HepG2 (cell line): ENCODE measurements at regions of chr1 and their contacts with region 1.

Region 1: GRCh38 chr1:8169364-8170058 is 143.4 kb upstream of the ERRFI1 start:
- DNase-seq: peak; percentile 93
- ATAC-seq: peak; percentile 90
- H3K4me3 ChIP-seq: peak overlapping the region in 1 of 3 experiments; percentile 42; a peak in 2 of 6 replicates
- H3K27ac ChIP-seq: peak overlapping the region; percentile 97
- H3K4me1 ChIP-seq: peaks cover 76% of the 10 kb centered on the region
- H3K27me3 ChIP-seq: no peaks in the 10 kb centered on the region
- CTCF ChIP-seq: no peak
- EP300 ChIP-seq: peak in 1 of 2 experiments; percentile 86; a peak in 2 of 4 replicates
- POLR2A ChIP-seq: peak in 1 of 2 experiments; percentile 43; a peak in 3 of 4 replicates
- RAD21 ChIP-seq: no peak

Region 2: GRCh38 chr1:7539769-7540175 is 629.7 kb before region 1 on chr1:
- CTCF ChIA-PET with region 1: no interaction called
- POLR2A ChIA-PET with region 1: no interaction called
- in situ Hi-C with region 1: no loop called
- intact Hi-C with region 1: no loop called
- DNase-seq: no peak
- ATAC-seq: no peak
- H3K4me3 ChIP-seq: no peak overlapping the region
- H3K27ac ChIP-seq: no peak overlapping the region
- H3K4me1 ChIP-seq: 0 out of 2 replicates have a peak, but pooled peaks cover 6% of the 10 kb centered on the region
- H3K27me3 ChIP-seq: peaks cover 4 to 30% of the 10 kb centered on the region in 2 experiments; a peak in 4 of 5 replicates
- CTCF ChIP-seq: peak; percentile 51
- EP300 ChIP-seq: no peak
- POLR2A ChIP-seq: no peak
- RAD21 ChIP-seq: no peak

Region 3: DNA sequence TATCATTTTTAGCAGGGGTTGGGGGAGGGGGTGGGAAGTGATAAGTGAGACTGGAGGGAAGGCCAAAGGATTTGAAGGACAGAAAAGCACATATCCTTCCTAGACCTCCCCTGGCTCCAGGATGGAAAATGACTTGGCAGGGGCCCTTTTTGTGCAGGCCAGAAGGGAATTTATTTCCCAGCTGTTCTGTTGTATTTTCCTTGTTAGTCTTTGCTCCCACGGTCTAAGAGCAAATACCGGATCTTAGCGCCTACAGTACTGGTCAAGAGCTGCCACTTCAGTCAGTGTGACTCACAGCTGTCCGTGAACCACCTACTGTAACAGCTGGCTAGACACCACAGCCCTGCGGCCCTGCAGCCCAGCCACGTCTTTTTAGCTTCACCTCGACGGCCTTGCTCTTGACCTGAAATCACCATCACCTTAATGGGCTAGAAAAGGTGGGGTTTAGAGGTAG is 92.4 kb before region 1 on chr1:
- CTCF ChIA-PET with region 1: no interaction called
- POLR2A ChIA-PET with region 1: interaction called, 16 read pairs
- in situ Hi-C with region 1: no loop called
- intact Hi-C with region 1: no loop called
- DNase-seq: peak; percentile 93
- ATAC-seq: peak; percentile 99
- H3K4me3 ChIP-seq: peak overlapping the region; percentile 36 to 50 (median 47); a peak in 5 of 6 replicates
- H3K27ac ChIP-seq: peak overlapping the region; percentile 57
- H3K4me1 ChIP-seq: peaks cover 89% of the 10 kb centered on the region
- H3K27me3 ChIP-seq: no peaks in the 10 kb centered on the region
- CTCF ChIP-seq: 0 out of 2 replicates have a peak, but pooled peaks have one; percentile 10
- EP300 ChIP-seq: peak in 1 of 2 experiments; percentile 62; a peak in 2 of 4 replicates
- POLR2A ChIP-seq: peak; percentile 22 to 55; a peak in 1 of 4 replicates
- RAD21 ChIP-seq: peak; percentile 26; the same call in 1 of the 2 replicates

Region 4: GRCh38 chr1:8182034-8182761 is 12.7 kb after region 1 on chr1:
- CTCF ChIA-PET with region 1: no interaction called
- POLR2A ChIA-PET with region 1: interaction called, 11 read pairs
- in situ Hi-C with region 1: no loop called
- intact Hi-C with region 1: no loop called
- DNase-seq: peak; percentile 85
- ATAC-seq: peak; percentile 75
- H3K4me3 ChIP-seq: no peak overlapping the region; a peak in 1 of 6 replicates
- H3K27ac ChIP-seq: peak overlapping the region; percentile 64
- H3K4me1 ChIP-seq: peaks cover 54% of the 10 kb centered on the region
- H3K27me3 ChIP-seq: no peaks in the 10 kb centered on the region
- CTCF ChIP-seq: no peak
- EP300 ChIP-seq: peak in 1 of 2 experiments; percentile 76; a peak in 1 of 4 replicates
- POLR2A ChIP-seq: no peak
- RAD21 ChIP-seq: 0 out of 2 replicates have a peak, but pooled peaks have one; percentile 21

Region 5: DNA sequence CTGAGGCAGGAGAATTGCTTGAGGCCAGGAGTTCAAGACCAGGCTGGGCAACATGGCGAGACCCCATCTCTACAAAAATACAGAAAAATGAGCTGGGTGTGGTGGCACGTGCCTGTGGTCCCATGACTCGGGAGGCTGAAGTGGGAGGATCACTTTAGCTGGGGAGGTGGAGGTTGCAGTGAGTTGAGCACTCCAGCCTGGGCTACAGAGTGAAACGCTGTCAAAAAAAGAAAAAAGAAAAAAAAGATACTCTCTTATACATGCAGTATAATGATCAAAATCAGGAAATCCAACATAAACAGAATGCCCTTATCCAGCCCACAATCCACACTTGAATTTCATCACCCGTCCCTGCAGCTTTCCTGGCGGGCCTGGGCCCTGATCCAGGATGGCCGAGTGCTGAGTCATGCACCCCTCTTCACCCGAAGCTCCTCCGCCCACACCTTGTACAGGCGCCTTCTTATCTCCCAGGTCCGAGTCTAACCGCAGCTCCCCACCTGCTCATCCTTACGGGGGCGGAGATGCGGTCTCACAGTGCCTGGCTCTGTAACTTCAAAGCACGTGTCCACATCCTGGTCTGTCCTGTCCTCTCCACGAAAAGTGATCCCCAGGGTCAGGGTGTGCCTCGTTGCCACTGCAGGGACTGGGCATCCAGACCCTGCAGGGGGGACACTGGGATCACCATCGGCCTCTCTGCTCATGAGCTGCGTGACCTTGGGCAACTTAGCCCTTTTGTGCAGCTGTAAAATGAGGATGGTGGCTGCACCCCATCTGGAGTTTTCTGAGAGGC is 28.2 kb after region 1 on chr1:
- CTCF ChIA-PET with region 1: no interaction called
- POLR2A ChIA-PET with region 1: interaction called, 22 read pairs
- in situ Hi-C with region 1: no loop called
- intact Hi-C with region 1: no loop called
- DNase-seq: peak; percentile 83
- ATAC-seq: peak; percentile 35
- H3K4me3 ChIP-seq: no peak overlapping the region
- H3K27ac ChIP-seq: peak overlapping the region; percentile 61
- H3K4me1 ChIP-seq: peaks cover 91% of the 10 kb centered on the region
- H3K27me3 ChIP-seq: no peaks in the 10 kb centered on the region
- CTCF ChIP-seq: 0 out of 2 replicates have a peak, but pooled peaks have one; percentile 3
- EP300 ChIP-seq: peak; percentile 71 to 95; a peak in 3 of 4 replicates
- POLR2A ChIP-seq: no peak
- RAD21 ChIP-seq: no peak

Region 6: GRCh38 chr1:8238851-8239305 is 69.4 kb after region 1 on chr1:
- CTCF ChIA-PET with region 1: no interaction called
- POLR2A ChIA-PET with region 1: interaction called, 14 read pairs
- in situ Hi-C with region 1: no loop called
- intact Hi-C with region 1: no loop called
- DNase-seq: peak; percentile 79
- ATAC-seq: peak; percentile 57
- H3K4me3 ChIP-seq: peak overlapping the region in 2 of 3 experiments; percentile 2 to 42; a peak in 3 of 6 replicates
- H3K27ac ChIP-seq: peak overlapping the region; percentile 84
- H3K4me1 ChIP-seq: peaks cover 58% of the 10 kb centered on the region
- H3K27me3 ChIP-seq: no peaks in the 10 kb centered on the region
- CTCF ChIP-seq: peak; percentile 53; the same call in 1 of the 2 replicates
- EP300 ChIP-seq: no peak; a peak in 1 of 4 replicates
- POLR2A ChIP-seq: no peak
- RAD21 ChIP-seq: no peak

Region 7: GRCh38 chr1:8302081-8302956 is 132.8 kb after region 1 on chr1:
- CTCF ChIA-PET with region 1: no interaction called
- POLR2A ChIA-PET with region 1: no interaction called
- in situ Hi-C with region 1: no loop called
- intact Hi-C with region 1: no loop called
- DNase-seq: no peak
- ATAC-seq: no peak
- H3K4me3 ChIP-seq: no peak overlapping the region
- H3K27ac ChIP-seq: no peak overlapping the region
- H3K4me1 ChIP-seq: peaks cover 19% of the 10 kb centered on the region
- H3K27me3 ChIP-seq: no peaks in the 10 kb centered on the region
- CTCF ChIP-seq: no peak
- EP300 ChIP-seq: no peak
- POLR2A ChIP-seq: no peak
- RAD21 ChIP-seq: no peak

Region 8: GRCh38 chr1:8396786-8397406 is 227.4 kb after region 1 on chr1:
- CTCF ChIA-PET with region 1: no interaction called
- POLR2A ChIA-PET with region 1: no interaction called
- in situ Hi-C with region 1: no loop called
- intact Hi-C with region 1: no loop called
- DNase-seq: peak; percentile 38
- ATAC-seq: peak; percentile 60
- H3K4me3 ChIP-seq: no peak overlapping the region
- H3K27ac ChIP-seq: no peak overlapping the region
- H3K4me1 ChIP-seq: peaks cover 23% of the 10 kb centered on the region
- H3K27me3 ChIP-seq: no peaks in the 10 kb centered on the region
- CTCF ChIP-seq: no peak
- EP300 ChIP-seq: no peak
- POLR2A ChIP-seq: no peak
- RAD21 ChIP-seq: no peak

Region 9: GRCh38 chr1:8497210-8497801 is 327.8 kb after region 1 on chr1:
- CTCF ChIA-PET with region 1: no interaction called
- POLR2A ChIA-PET with region 1: no interaction called
- in situ Hi-C with region 1: no loop called
- intact Hi-C with region 1: no loop called
- DNase-seq: no peak
- ATAC-seq: no peak
- H3K4me3 ChIP-seq: no peak overlapping the region
- H3K27ac ChIP-seq: no peak overlapping the region
- H3K4me1 ChIP-seq: no peaks in the 10 kb centered on the region
- H3K27me3 ChIP-seq: no peaks in the 10 kb centered on the region
- CTCF ChIP-seq: no peak
- EP300 ChIP-seq: no peak
- POLR2A ChIP-seq: no peak
- RAD21 ChIP-seq: no peak